Right ventricle myocardium inferior (tissue), 1 donor: ENCODE measurements at regions of chr15 and their contacts with region 1.

Region 1: DNA sequence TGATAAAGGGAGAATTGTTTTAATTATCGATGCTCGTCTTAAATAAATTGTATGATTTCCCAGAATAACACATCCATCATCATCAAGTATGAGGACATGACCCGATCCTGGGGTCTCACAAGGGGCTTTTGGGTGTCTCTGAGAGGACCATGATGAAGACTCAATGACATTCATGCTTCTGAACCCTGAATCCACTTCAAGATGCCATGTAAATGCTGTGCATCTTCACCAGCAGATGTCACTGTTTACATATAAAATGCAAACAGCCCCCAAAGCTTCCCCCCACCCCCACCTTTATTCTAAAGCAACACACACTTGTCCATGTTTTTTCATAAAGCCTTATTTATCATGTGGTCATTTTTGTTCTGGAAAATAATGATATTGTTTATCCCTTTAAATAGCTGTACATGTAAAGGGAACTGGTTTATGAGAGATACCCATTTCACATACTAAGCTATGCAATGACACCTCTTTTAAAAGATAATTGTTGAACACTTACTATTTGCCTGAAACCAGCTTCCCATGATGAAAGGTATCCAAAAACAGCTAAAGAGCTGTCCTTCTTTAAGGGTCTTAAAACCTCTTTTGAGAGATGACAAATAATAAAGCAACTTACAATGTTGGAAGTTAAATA is 69.7 kb upstream of the UBE3A start:
- DNase-seq: no peak
- ATAC-seq: no peak

Region 2: GRCh38 chr15:25450163-25450562 is 58.3 kb before region 1 on chr15:
- intact Hi-C with region 1: loop called (anchors 10 kb)
- DNase-seq: no peak
- ATAC-seq: no peak

Region 3: DNA sequence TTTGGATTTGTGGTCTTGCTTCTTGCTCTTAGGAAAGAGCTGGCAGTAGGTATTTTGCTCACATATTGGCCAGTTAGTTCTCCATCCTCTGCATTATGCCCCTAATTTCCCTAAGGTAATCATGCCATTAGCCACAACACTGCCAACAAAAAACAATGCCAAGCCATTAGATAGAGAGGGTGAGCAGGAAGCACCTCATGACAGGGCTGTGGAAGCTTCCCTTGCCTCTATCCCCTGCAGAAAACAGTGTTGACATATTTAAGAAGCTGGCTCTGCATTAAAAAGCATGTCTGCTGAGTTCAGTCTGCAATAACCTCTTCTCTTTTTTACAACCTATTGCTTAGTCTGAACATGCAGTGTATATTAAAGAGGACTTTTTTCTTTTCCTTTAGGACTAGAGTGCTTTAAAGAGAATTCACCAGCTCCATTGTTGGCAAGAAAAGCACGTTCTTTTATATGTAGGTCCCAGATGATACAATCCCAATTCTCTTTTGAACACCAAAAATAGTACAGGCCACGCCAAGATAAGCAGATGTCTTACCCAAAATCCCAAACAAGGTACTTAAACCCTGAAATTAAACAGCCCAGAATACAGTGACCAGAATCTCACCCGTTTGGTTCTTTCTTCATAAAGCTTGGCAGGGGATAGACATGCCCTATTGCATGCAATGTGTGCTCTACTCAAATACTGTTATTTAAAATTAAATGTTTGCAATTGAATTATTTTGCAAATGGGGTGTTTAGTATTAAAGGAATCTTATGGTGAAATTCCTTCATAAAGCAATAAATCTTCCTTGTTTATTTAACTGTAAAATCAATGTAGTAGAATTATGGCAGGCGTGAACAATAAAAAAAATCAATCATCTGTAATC is 24.0 kb after region 1 on chr15:
- intact Hi-C with region 1: no loop called
- DNase-seq: no peak
- ATAC-seq: peak; percentile 72

Region 4: GRCh38 chr15:25543196-25543595 is 34.7 kb after region 1 on chr15:
- intact Hi-C with region 1: no loop called
- DNase-seq: no peak
- ATAC-seq: peak; percentile 64

Region 5: DNA sequence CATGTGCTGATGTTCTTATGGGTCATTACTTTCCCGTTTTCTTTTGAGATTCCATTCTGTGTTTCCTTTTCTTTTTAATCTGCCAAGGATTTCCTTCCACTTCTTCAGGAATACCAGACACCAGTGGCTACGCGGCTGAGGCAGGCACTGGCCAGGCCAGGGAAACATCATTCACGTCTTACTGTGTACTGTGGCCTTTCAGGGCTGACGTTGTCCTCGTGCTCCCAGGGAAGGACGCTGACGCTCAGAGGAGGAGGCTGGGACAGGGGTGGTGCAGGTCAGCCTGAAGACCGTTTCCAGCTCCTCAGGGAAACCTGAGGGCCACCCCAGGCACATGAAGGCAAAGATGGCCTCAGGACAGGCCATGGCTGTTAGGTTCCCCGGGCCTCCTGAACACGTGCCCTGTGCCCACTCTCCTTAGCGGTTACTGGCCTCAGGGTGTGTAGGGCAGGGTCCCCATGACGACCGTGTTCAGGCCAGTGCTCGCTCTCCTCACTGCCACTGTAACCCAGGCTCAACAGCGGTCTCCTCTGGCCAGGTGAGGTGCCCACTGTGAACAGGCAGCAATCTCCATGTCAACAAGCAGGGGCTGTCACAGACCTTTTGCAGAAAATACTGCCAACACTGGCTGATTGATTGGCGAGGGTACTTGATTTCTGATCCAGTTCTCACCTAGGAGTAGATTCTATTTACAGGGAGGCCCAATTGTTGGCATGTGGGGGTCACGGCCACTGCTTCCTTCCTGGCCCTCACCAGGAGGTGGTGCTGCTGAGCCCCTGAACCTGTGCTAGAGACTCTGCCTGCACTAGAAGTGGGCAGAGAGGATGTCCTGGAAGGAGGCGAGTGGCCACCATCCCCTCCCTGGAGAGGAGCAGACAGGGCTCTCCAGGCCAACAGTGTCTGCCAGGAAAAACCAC is 185.1 kb after region 1 on chr15:
- intact Hi-C with region 1: loop called (anchors 1 kb)
- DNase-seq: no peak
- ATAC-seq: peak; percentile 65

Region 6: DNA sequence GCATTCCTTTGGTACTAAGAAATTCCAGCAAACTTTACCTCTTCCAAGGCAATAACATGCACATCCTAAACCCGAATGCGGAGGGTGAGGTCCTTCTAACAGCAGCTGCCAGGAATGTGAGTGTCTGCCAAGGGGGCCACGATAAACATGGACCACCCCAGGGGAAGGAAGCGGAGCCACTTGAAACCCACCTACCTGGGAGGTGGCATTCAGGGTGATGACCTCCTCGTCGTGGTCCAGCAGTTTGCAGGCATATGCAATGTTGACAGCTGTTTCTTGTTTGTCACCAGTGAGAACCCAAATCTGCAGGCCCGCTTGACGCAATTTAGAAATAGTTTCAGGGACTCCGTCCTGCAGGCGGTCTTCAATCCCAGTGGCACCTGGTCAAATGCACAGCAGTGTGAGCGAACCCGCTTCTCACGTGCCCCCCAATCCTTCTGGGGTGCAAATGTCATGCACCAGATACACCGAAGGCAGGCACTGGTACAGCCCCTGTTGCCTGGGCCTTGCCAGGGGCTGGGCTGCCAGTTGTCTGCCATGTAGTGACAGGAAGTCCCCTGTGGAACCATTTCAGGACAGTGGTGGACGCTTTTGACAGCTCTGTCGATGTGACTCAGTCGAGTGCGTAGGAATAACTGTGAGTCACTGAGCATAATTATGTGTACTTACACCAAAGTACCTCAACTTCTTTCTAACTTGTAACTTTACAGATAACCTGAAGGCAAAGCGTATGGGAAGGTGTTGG is 193.4 kb after region 1 on chr15:
- intact Hi-C with region 1: loop called (anchors 5 kb)
- DNase-seq: no peak
- ATAC-seq: no peak

Region 7: DNA sequence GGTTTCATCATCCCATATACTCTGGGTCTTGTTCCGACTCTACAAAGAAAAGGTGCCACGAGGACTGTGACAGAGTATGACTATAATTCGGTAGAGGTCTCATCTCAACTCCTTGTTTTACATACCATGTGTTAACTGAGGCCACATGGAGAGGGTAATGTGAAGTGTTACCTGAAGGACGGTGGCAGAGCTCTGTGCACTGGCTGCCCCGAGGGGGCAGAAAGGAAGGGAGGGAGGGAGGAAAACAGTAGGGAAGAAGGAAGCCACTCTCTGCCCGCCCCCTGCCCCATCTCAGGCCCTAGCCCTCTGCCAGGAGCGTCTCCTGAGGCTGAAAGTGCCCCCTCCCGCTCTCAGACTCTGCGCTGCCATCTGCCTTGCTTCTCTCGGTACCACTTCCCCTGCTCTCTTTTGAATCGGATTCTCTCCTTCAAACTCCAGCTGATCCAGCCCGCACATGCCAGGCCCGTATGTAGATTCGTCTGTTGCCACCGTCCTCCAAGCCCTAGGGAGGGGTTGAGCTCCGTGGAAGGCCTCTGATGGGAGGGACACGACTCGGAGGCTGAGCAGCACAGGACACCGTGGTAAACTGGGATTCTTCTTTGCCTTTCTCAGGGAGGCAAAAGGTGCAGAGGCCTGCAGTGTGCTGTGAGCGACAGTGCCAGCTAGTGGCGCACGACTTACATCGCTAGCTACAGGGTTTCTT is 425.1 kb after region 1 on chr15:
- intact Hi-C with region 1: loop called (anchors 5 kb)
- DNase-seq: no peak
- ATAC-seq: peak; percentile 88

Region 8: DNA sequence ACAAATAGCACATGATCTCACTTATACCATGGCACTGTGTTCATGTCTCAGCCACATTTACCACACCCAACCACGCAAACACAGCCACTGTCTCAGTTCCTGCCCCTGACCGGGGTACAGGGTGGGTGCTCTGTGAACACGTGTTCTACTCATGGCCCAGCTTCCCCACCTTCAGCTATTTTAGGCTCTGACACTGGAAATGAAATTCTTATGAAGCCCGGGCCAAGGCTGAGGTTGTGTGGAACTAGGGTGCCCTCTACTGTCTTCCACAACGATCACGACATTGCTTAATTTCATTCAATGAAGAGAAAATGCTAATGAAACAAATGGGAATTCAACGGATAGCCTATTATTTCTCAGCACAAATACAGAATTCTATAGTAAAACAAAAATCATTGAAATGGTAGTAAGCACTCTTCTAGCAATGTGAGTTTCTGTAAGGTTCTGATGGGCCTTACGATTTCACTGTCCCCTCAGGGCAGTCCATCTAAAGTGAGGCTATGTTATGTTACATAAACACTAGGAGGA is 1356.2 kb after region 1 on chr15:
- intact Hi-C with region 1: loop called (anchors 5 kb)
- DNase-seq: no peak
- ATAC-seq: peak; percentile 56